Activated CD8-positive, alpha-beta T cell treated with anti-CD3 and anti-CD28 coated beads for 36 hours (primary cell): ENCODE measurements at regions of chr1 and their contacts with region 1.

Region 1: GRCh38 chr1:32005522-32005921 is 8.1 kb upstream of the KHDRBS1 start:
- DNase-seq: no peak
- ATAC-seq: no peak
- H3K4me3 Mint-ChIP-seq: no peak overlapping the region
- H3K27ac Mint-ChIP-seq: no peak overlapping the region
- H3K4me1 Mint-ChIP-seq: peaks cover 3% of the 10 kb centered on the region
- H3K27me3 Mint-ChIP-seq: no peaks in the 10 kb centered on the region
- CTCF ChIP-seq: no peak

Region 2: GRCh38 chr1:31891280-31891679 is 114.2 kb before region 1 on chr1:
- CTCF ChIA-PET with region 1: no interaction called
- POLR2A ChIA-PET with region 1: no interaction called
- intact Hi-C with region 1: no loop called
- DNase-seq: peak; percentile 71
- ATAC-seq: peak; percentile 63
- H3K4me3 Mint-ChIP-seq: no peak overlapping the region
- H3K27ac Mint-ChIP-seq: peak overlapping the region; percentile 30
- H3K4me1 Mint-ChIP-seq: peaks cover 27% of the 10 kb centered on the region
- H3K27me3 Mint-ChIP-seq: no peaks in the 10 kb centered on the region
- CTCF ChIP-seq: no peak

Region 3: GRCh38 chr1:31961536-31961935 is 44.0 kb before region 1 on chr1:
- CTCF ChIA-PET with region 1: interaction called, 16 read pairs
- POLR2A ChIA-PET with region 1: interaction called, 3 read pairs
- intact Hi-C with region 1: no loop called
- DNase-seq: no peak
- ATAC-seq: no peak
- H3K4me3 Mint-ChIP-seq: no peak overlapping the region
- H3K27ac Mint-ChIP-seq: peak overlapping the region; percentile 37
- H3K4me1 Mint-ChIP-seq: peaks cover 56% of the 10 kb centered on the region
- H3K27me3 Mint-ChIP-seq: no peaks in the 10 kb centered on the region
- CTCF ChIP-seq: no peak

Region 4: GRCh38 chr1:31984419-31985347 is 20.8 kb before region 1 on chr1:
- CTCF ChIA-PET with region 1: interaction called, 16 read pairs
- POLR2A ChIA-PET with region 1: interaction called, 4 read pairs
- intact Hi-C with region 1: no loop called
- DNase-seq: peak; percentile 55
- ATAC-seq: peak; percentile 83
- H3K4me3 Mint-ChIP-seq: peak overlapping the region; percentile 39
- H3K27ac Mint-ChIP-seq: peak overlapping the region; percentile 90
- H3K4me1 Mint-ChIP-seq: peaks cover 46% of the 10 kb centered on the region
- H3K27me3 Mint-ChIP-seq: no peaks in the 10 kb centered on the region
- CTCF ChIP-seq: no peak